Caco-2 (cell line): ENCODE measurements at regions of chr20 and their contacts with region 1.

Region 1: DNA sequence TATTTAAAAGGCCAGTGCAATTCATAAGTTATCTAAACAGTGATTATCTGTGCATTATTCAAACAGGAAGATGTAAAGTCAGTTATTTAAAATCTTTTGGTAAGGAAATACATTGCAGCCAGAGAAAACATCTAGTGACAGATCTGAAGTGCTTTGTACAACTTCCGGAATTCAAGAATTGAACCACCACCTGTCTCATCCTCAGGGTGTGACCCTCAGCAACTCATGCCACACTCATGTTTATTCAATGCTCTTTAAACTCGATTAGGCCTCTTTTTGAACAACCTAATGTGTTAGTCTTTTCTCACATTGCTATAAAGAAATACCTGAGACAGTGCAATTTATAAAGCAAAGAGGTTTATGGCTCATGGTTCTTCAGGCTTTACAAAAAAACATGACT is 62.6 kb upstream of the GGTLC1 start:
- DNase-seq: no peak
- H3K4me3 ChIP-seq: no peak overlapping the region
- H3K4me3 Mint-ChIP-seq: no peak overlapping the region
- H3K27ac Mint-ChIP-seq: no peak overlapping the region
- H3K4me1 ChIP-seq: no peaks in the 10 kb centered on the region
- H3K4me1 Mint-ChIP-seq: peaks cover 6% of the 10 kb centered on the region
- H3K27me3 ChIP-seq: no peaks in the 10 kb centered on the region
- H3K27me3 Mint-ChIP-seq: peaks cover 9% of the 10 kb centered on the region
- CTCF ChIP-seq: no peak

Region 2: GRCh38 chr20:24027229-24027628 is 23.9 kb before region 1 on chr20:
- CTCF ChIA-PET with region 1: no interaction called
- POLR2A ChIA-PET with region 1: no interaction called
- intact Hi-C with region 1: loop called (anchors 1 kb)
- DNase-seq: no peak
- H3K4me3 ChIP-seq: no peak overlapping the region
- H3K4me3 Mint-ChIP-seq: no peak overlapping the region
- H3K27ac Mint-ChIP-seq: no peak overlapping the region
- H3K4me1 ChIP-seq: no peaks in the 10 kb centered on the region
- H3K4me1 Mint-ChIP-seq: no peaks in the 10 kb centered on the region
- H3K27me3 ChIP-seq: no peaks in the 10 kb centered on the region; the same call in 1 of the 2 replicates
- H3K27me3 Mint-ChIP-seq: peaks cover 17% of the 10 kb centered on the region
- CTCF ChIP-seq: no peak

Region 3: DNA sequence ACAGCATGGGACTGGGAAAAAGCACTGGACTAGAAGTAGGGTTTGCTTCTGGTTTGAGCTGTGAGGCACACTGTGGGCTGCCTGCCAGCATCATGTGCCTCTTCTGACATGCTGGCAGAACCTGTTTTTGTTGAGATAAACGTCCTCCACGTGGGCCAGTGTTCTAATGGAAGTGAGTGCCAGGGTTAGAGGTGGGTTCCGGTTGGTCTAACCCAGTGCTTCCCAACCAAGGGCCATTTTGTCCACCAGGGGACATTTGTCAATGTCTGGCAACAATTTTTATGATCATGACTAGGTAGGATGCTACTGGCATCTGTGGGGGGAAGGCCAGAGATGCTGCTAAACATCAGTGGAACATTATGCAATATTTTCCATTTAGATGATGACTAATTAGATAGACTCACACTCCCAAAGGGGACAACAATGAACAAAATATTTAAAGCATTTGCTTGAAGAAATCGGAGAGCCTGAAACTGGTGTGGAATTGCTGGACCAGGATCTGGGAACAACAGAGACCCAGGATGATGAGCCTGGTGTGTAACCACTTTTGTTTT is 949.2 kb after region 1 on chr20:
- CTCF ChIA-PET with region 1: no interaction called
- POLR2A ChIA-PET with region 1: no interaction called
- intact Hi-C with region 1: no loop called
- DNase-seq: peak; percentile 38 to 58
- H3K4me3 ChIP-seq: no peak overlapping the region
- H3K4me3 Mint-ChIP-seq: no peak overlapping the region
- H3K27ac Mint-ChIP-seq: no peak overlapping the region
- H3K4me1 ChIP-seq: no peaks in the 10 kb centered on the region
- H3K4me1 Mint-ChIP-seq: no peaks in the 10 kb centered on the region
- H3K27me3 ChIP-seq: no peaks in the 10 kb centered on the region
- H3K27me3 Mint-ChIP-seq: no peaks in the 10 kb centered on the region
- CTCF ChIP-seq: no peak